ENCODE measurements at regions of chr7 and their contacts with region 1.

Region 1: DNA sequence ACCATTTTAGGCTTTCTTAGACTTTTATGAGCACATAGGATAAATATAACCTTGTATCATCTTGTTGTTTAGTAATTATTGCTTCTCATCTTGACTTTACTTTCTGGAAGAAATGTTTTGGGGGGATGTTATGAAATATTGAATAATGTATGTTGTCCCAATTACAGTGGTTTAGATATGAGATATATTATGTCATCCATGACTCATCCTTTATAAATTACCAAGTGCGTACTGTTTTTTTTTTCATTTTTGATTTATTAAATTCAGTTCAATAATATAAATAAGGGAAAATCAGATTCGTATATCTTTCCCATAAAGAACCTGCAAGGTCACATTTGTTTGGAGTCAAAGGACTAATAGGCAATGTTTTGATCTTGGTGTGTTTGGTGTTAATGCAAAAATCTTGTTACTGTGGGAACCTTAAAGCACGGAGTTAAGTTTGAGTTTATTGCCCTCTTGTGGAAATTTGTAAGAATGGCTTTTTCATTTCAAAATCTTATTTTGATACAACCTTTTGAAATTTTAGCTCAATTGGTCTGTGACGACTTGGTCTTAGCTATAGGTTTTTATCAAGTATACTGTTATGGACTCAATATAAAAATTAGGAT is 108.6 kb downstream of the SRI start:
- DNase-seq: no peak
- ATAC-seq: peak in 1 of 2 donors; percentile 55
- H3K4me3 ChIP-seq: no peak overlapping the region
- H3K27ac ChIP-seq: no peak overlapping the region
- H3K4me1 ChIP-seq: no peaks in the 10 kb centered on the region
- H3K27me3 ChIP-seq: no peaks in the 10 kb centered on the region

Region 2: DNA sequence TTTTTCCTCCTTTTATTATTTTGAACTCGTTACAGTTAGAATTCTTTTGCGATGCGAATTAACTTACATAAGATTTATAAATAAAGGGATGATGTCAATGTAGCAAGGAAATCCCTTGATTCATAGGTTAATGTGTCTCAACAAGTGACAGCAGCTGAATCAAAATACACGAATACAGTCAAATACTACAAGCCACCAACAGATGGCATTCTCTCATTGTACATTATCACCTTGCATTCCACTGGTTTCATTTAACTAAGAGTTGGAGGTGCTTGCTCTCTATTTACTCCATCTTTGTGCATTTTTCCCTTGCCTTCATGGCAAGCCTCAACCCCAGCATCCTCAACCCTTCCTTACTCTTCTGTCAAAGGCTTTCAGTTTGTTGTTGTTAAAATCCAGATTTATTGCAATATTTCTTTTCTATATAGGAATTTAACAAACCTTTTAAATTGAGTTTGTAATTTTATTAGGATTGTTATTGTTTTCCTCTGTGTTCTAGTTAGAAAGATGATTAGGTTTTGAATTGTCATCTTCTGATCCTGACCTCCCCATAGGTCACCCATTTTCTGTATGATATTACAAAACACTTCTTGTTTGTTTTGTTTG is 313.3 kb before region 1 on chr7:
- intact Hi-C with region 1: loop called (anchors 5 to 10 kb)
- DNase-seq: no peak
- ATAC-seq: peak; percentile 38 to 41
- H3K4me3 ChIP-seq: no peak overlapping the region
- H3K27ac ChIP-seq: no peak overlapping the region
- H3K4me1 ChIP-seq: no peaks in the 10 kb centered on the region
- H3K27me3 ChIP-seq: no peaks in the 10 kb centered on the region

Measured in right cardiac atrium (tissue), 5 donors.